Esophagus muscularis mucosa (tissue), 4 donors: ENCODE measurements at regions of chr5 and their contacts with region 1.

Region 1: DNA sequence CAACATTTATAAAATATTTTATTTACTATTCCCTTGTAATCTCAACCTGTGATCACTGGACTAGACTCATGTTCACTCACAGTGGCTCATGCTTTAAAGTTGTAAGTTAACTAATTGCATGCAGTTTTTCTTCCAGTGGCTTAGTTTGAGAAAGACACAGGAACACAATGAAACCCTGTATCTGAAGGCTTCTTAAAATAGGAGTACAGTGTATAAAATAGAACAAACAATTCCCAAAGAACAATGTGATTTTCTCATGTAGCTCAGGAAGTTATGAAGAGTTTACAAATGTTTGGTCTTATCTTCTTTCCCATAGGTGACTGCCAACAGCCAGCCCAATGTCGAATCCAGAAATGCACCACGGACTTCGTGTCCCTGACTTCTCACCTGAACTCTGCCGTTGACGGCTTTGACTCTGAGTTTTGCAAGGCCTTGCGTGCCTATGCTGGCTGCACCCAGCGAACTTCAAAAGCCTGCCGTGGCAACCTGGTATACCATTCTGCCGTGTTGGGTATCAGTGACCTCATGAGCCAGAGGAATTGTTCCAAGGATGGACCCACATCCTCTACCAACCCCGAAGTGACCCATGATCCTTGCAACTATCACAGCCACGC is 5.9 kb downstream of the RGMB start:
- DNase-seq: no peak
- H3K4me3 ChIP-seq: peak overlapping the region; percentile 27 to 81 (median 32)
- H3K27ac ChIP-seq: peak overlapping the region; percentile 44 to 94 (median 93)
- H3K4me1 ChIP-seq: peaks cover 32 to 97% (median 86%) of the 10 kb centered on the region in 4 donors
- H3K27me3 ChIP-seq: no peaks in the 10 kb centered on the region
- CTCF ChIP-seq: no peak
- EP300 ChIP-seq: no peak
- POLR2A ChIP-seq: no peak

Region 2: DNA sequence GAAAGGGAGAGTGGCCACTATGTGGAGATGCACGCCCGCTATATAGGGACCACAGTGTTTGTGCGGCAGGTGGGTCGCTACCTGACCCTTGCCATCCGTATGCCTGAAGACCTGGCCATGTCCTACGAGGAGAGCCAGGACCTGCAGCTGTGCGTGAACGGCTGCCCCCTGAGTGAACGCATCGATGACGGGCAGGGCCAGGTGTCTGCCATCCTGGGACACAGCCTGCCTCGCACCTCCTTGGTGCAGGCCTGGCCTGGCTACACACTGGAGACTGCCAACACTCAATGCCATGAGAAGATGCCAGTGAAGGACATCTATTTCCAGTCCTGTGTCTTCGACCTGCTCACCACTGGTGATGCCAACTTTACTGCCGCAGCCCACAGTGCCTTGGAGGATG is 13.9 kb after region 1 on chr5:
- intact Hi-C with region 1: loop called (anchors 2 kb)
- DNase-seq: no peak
- H3K4me3 ChIP-seq: no peak overlapping the region
- H3K27ac ChIP-seq: peak overlapping the region in 2 of 4 donors; percentile 0 to 1
- H3K4me1 ChIP-seq: peaks cover 6 to 87% (median 84%) of the 10 kb centered on the region in 4 donors
- H3K27me3 ChIP-seq: no peaks in the 10 kb centered on the region
- CTCF ChIP-seq: no peak
- EP300 ChIP-seq: no peak
- POLR2A ChIP-seq: no peak

Region 3: DNA sequence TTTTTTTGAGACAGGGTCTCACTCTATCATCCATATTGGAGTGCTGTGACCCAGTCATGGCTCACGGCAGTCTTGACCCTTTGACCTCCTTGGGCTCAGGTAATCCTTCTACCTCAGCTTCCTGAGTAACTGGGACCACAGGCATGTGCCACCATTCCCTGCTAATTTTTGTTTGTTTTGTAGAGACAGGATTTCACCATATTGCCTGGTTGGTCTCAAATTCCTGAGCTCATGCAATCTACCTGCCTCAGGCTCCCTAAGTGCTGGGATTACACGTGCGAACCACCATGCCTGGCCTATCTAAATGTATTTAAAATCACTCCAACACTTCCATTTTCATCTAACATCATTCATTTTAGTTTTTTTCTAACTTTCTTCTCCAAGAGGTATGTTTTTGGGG is 340.0 kb after region 1 on chr5:
- intact Hi-C with region 1: no loop called
- DNase-seq: no peak
- H3K4me3 ChIP-seq: no peak overlapping the region
- H3K27ac ChIP-seq: no peak overlapping the region
- H3K4me1 ChIP-seq: no peaks in the 10 kb centered on the region
- H3K27me3 ChIP-seq: no peaks in the 10 kb centered on the region
- CTCF ChIP-seq: no peak
- EP300 ChIP-seq: no peak
- POLR2A ChIP-seq: no peak